A673 (cell line): ENCODE measurements at regions of chr12 and their contacts with region 1.

Region 1: GRCh38 chr12:41819948-41820347 is 324.7 kb downstream of the GXYLT1 start:
- DNase-seq: peak; percentile 76
- H3K4me3 ChIP-seq: no peak overlapping the region
- H3K27ac ChIP-seq: peak overlapping the region; percentile 70
- H3K4me1 ChIP-seq: peaks cover 19% of the 10 kb centered on the region
- H3K27me3 ChIP-seq: no peaks in the 10 kb centered on the region
- CTCF ChIP-seq: no peak

Region 2: DNA sequence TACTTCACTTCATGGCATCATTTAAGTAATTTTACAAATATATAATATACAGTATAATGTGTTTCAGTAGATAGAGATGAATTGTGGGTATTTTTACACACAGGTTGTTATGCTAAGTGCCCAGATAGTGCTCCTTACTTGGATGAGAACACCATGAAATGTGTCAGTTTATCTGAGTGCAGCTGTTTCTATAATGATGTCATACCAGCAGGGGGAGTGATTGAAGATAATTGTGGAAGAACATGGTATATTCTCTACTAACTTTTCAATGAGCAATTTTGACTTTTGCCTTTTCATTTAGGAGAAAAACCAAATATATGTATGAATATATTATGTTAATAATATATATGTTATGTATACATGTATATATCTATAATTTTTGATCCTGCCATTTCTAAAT is 1373.6 kb before region 1 on chr12:
- CTCF ChIA-PET with region 1: no interaction called
- POLR2A ChIA-PET with region 1: interaction called, 4 read pairs
- intact Hi-C with region 1: loop called (anchors 5 kb)
- DNase-seq: peak; percentile 69
- H3K4me3 ChIP-seq: no peak overlapping the region
- H3K27ac ChIP-seq: no peak overlapping the region
- H3K4me1 ChIP-seq: peaks cover 41% of the 10 kb centered on the region
- H3K27me3 ChIP-seq: no peaks in the 10 kb centered on the region
- CTCF ChIP-seq: peak; percentile 61

Region 3: DNA sequence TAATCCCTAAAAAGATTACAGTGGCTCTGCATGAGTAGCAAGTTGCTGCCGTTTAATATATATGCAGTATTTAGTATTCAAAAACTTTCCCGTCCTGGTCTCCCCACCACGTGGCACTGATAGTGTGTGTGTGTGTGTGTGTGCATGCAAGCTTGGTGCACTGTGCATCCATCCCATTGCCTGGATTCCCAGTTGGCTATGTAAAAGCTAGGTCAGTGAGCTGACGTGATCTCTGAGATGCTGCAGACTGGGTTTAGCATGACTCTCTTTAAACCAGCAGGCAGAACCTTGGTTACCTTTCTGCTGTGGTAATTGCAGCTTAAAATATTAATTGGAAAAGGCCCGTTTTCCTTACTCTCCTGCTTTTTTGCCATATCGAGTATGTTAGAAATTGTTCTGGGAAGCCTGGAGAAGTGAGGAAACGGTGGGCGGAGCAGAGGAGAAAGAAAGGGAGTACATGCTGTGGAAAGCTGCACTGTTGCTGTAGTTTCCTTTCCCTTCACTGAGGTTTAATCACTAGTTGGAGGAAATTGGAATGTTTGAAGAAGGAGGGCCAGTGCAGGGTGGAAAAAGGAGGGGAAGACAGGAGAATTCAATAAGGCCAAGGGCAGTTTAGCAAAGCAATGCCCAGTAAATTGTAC is 1131.7 kb before region 1 on chr12:
- CTCF ChIA-PET with region 1: no interaction called
- POLR2A ChIA-PET with region 1: no interaction called
- intact Hi-C with region 1: loop called (anchors 5 kb)
- DNase-seq: no peak
- H3K4me3 ChIP-seq: no peak overlapping the region
- H3K27ac ChIP-seq: no peak overlapping the region
- H3K4me1 ChIP-seq: peaks cover 4% of the 10 kb centered on the region
- H3K27me3 ChIP-seq: no peaks in the 10 kb centered on the region
- CTCF ChIP-seq: no peak

Region 4: DNA sequence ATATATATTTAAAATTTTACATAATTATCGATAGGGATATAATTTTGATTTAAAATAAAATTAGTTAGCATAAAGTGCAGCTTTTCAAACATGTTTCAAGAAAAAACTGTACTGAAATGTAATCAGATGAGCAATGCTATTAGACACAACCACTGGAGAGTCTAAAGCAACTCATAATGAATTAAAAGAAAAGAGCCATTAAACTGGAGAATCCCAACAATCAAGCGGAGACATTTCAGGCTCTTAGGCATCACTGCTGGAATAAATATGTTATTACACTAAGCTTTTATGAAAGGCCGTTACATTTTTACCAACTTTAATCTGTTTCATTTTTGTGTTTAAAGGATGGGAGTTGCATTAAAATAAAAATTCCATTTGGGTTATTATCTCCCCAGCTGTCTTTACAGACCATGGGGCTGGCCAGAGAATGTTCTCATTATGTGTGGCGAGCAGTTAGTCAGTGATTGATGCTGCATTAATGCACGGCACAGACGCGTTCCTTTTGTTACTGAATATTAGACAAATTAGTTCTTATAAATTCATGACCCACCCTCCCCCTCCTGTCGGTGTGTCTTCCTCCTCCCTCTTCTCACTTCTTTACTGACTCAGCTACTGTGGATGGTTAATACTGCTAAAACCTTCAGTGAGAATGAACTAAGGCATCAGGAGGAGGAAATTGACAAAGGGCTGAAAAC is 475.0 kb before region 1 on chr12:
- CTCF ChIA-PET with region 1: no interaction called
- POLR2A ChIA-PET with region 1: no interaction called
- intact Hi-C with region 1: no loop called
- DNase-seq: peak; percentile 3
- H3K4me3 ChIP-seq: no peak overlapping the region
- H3K27ac ChIP-seq: no peak overlapping the region
- H3K4me1 ChIP-seq: no peaks in the 10 kb centered on the region
- H3K27me3 ChIP-seq: no peaks in the 10 kb centered on the region
- CTCF ChIP-seq: no peak

Region 5: DNA sequence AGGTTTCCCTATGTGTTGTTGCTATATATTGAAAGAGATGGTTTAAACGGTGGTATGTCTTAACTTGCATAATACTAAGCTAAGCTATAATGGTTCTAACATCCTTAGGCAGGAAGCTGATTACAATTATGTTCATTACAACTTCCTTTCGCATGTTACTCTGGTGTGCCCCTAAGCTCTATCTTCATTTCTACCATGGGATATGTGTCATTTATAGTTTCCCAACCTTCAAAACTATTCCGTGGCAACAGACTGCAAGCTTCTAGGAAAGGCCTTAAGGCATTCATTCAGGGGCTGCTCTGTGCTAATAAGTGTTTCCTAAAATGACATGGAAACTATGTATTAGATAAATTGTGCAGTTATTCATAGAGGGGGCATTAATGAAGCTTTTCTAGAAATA is 30.1 kb after region 1 on chr12:
- CTCF ChIA-PET with region 1: no interaction called
- POLR2A ChIA-PET with region 1: interaction called, 20 read pairs
- intact Hi-C with region 1: no loop called
- DNase-seq: peak; percentile 96
- H3K4me3 ChIP-seq: no peak overlapping the region
- H3K27ac ChIP-seq: peak overlapping the region; percentile 84
- H3K4me1 ChIP-seq: peaks cover 34% of the 10 kb centered on the region
- H3K27me3 ChIP-seq: no peaks in the 10 kb centered on the region
- CTCF ChIP-seq: no peak